GM23248 (cell line): ENCODE measurements at regions of chr11 and their contacts with region 1.

Region 1: GRCh38 chr11:35605711-35606110 is 12.5 kb upstream of the FJX1 start:
- DNase-seq: peak; percentile 42
- H3K4me3 ChIP-seq: no peak overlapping the region
- H3K27ac ChIP-seq: no peak overlapping the region
- H3K4me1 ChIP-seq: peaks cover 11% of the 10 kb centered on the region
- H3K27me3 ChIP-seq: no peaks in the 10 kb centered on the region

Region 2: GRCh38 chr11:35427071-35427470 is 178.6 kb before region 1 on chr11:
- in situ Hi-C with region 1: no loop called
- DNase-seq: peak; percentile 78
- H3K4me3 ChIP-seq: no peak overlapping the region
- H3K27ac ChIP-seq: no peak overlapping the region
- H3K4me1 ChIP-seq: peaks cover 45% of the 10 kb centered on the region
- H3K27me3 ChIP-seq: no peaks in the 10 kb centered on the region

Region 3: GRCh38 chr11:35549787-35550186 is 55.9 kb before region 1 on chr11:
- in situ Hi-C with region 1: loop called (anchors 10 kb)
- DNase-seq: peak; percentile 97
- H3K4me3 ChIP-seq: 0 out of 2 replicates have a peak overlapping the region, but pooled peaks have one; percentile 14
- H3K27ac ChIP-seq: peak overlapping the region; percentile 88
- H3K4me1 ChIP-seq: peaks cover 40% of the 10 kb centered on the region
- H3K27me3 ChIP-seq: no peaks in the 10 kb centered on the region